Activated CD8-positive, alpha-beta T cell treated with anti-CD3 and anti-CD28 coated beads for 36 hours (primary cell): ENCODE measurements at regions of chr7 and their contacts with region 1.

Region 1: GRCh38 chr7:127717502-127718339 is 65.7 kb downstream of the SND1 start:
- DNase-seq: peak; percentile 7
- ATAC-seq: peak; percentile 34
- H3K4me3 Mint-ChIP-seq: no peak overlapping the region
- H3K27ac Mint-ChIP-seq: no peak overlapping the region
- H3K4me1 Mint-ChIP-seq: peaks cover 25% of the 10 kb centered on the region
- H3K27me3 Mint-ChIP-seq: no peaks in the 10 kb centered on the region
- CTCF ChIP-seq: no peak

Region 2: DNA sequence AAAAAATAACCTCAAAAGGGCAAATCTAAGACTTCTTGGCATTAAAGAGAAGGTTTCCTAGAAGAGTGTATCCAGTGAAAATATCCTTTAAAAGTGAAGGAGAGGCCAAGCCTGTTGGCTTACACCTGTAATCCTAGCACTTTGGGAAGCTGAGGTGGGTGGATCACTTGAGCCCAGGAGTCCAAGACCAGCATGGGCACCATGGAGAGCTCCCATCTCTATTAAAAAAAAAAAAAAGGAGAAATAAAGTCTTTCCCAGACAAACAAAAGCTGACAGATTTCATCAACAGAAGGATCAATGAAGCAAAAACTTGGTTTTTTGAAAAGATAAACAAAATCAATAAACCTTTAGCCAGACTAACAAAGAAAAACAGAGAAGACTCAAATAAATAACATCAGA is 257.6 kb before region 1 on chr7:
- CTCF ChIA-PET with region 1: no interaction called
- POLR2A ChIA-PET with region 1: no interaction called
- intact Hi-C with region 1: no loop called
- DNase-seq: no peak
- ATAC-seq: no peak
- H3K4me3 Mint-ChIP-seq: no peak overlapping the region
- H3K27ac Mint-ChIP-seq: no peak overlapping the region
- H3K4me1 Mint-ChIP-seq: no peaks in the 10 kb centered on the region
- H3K27me3 Mint-ChIP-seq: no peaks in the 10 kb centered on the region
- CTCF ChIP-seq: no peak

Region 3: DNA sequence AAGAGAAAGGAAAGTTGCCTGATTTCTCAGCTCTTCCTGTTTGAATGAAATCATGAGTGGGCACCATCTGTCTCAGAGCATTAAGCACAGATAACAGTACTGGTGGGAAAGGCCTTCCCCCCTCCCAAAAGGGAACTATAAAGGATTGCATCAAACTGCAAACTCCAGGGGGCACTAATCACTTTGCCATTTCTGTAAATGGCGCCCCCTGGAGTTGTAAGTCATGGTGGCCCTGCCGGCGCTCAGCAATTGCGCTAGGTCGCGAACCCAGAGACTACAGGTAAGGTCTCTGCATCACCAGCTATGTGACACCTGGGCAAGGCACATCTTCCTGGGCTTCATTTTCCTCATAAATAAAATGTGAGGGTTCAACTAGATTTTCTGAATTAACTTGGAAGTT is 302.4 kb after region 1 on chr7:
- CTCF ChIA-PET with region 1: no interaction called
- POLR2A ChIA-PET with region 1: no interaction called
- intact Hi-C with region 1: loop called (anchors 10 kb)
- DNase-seq: peak; percentile 53
- ATAC-seq: peak; percentile 39
- H3K4me3 Mint-ChIP-seq: no peak overlapping the region
- H3K27ac Mint-ChIP-seq: no peak overlapping the region
- H3K4me1 Mint-ChIP-seq: no peaks in the 10 kb centered on the region
- H3K27me3 Mint-ChIP-seq: no peaks in the 10 kb centered on the region
- CTCF ChIP-seq: peak; percentile 55